MCF 10A (cell line): ENCODE measurements at regions of chr18 and their contacts with region 1.

Region 1: DNA sequence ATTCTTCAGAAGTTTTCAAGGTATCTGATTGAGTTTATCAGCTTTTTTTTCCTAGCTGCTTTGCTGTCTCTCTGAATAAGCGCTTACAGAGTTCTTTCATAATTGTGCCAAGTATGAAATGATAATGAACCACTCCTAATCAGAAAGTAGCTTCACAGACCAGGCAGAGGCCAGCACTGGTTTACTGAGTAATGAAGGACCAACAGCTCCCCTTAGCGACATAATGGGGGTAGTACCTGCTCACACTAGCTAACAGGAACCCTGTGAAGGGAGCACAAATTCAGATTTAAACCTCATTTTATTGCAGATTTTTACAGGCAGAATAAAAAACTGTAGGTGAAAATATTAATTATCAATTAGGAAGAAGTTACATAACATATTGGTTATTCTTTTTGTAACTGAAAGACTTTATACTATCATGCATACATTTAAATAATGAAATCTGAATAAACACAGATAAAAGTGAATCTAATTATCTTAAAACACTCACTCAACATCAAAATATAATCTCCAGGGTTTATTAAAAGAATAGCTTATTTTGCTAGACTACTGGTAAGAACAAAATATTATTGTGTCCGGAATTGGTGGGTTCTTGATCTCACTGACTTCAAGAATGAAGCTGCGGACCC is 53.7 kb upstream of the LRRC30 start:
- DNase-seq: peak; percentile 78
- H3K4me3 Mint-ChIP-seq: no peak overlapping the region
- H3K27ac Mint-ChIP-seq: no peak overlapping the region
- H3K4me1 Mint-ChIP-seq: no peaks in the 10 kb centered on the region
- H3K27me3 Mint-ChIP-seq: peaks cover 29% of the 10 kb centered on the region
- CTCF ChIP-seq: peak; percentile 84

Region 2: GRCh38 chr18:7021994-7022840 is 155.0 kb before region 1 on chr18:
- CTCF ChIA-PET with region 1: interaction called, 43 read pairs
- POLR2A ChIA-PET with region 1: no interaction called
- intact Hi-C with region 1: loop called (anchors 1 kb)
- DNase-seq: peak; percentile 84
- H3K4me3 Mint-ChIP-seq: no peak overlapping the region
- H3K27ac Mint-ChIP-seq: peak overlapping the region; percentile 39
- H3K4me1 Mint-ChIP-seq: no peaks in the 10 kb centered on the region
- H3K27me3 Mint-ChIP-seq: no peaks in the 10 kb centered on the region
- CTCF ChIP-seq: peak; percentile 72

Region 3: GRCh38 chr18:7038330-7038851 is 138.8 kb before region 1 on chr18:
- CTCF ChIA-PET with region 1: interaction called, 41 read pairs
- POLR2A ChIA-PET with region 1: interaction called, 3 read pairs
- intact Hi-C with region 1: loop called (anchors 1 kb)
- DNase-seq: peak; percentile 97
- H3K4me3 Mint-ChIP-seq: peak overlapping the region; percentile 50
- H3K27ac Mint-ChIP-seq: peak overlapping the region; percentile 85
- H3K4me1 Mint-ChIP-seq: peaks cover 7% of the 10 kb centered on the region
- H3K27me3 Mint-ChIP-seq: no peaks in the 10 kb centered on the region
- CTCF ChIP-seq: peak; percentile 75

Region 4: GRCh38 chr18:7158216-7158615 is 19.0 kb before region 1 on chr18:
- CTCF ChIA-PET with region 1: interaction called, 18 read pairs
- POLR2A ChIA-PET with region 1: no interaction called
- intact Hi-C with region 1: no loop called
- DNase-seq: peak; percentile 33
- H3K4me3 Mint-ChIP-seq: no peak overlapping the region
- H3K27ac Mint-ChIP-seq: no peak overlapping the region
- H3K4me1 Mint-ChIP-seq: peaks cover 5% of the 10 kb centered on the region
- H3K27me3 Mint-ChIP-seq: no peaks in the 10 kb centered on the region
- CTCF ChIP-seq: no peak

Region 5: GRCh38 chr18:7164323-7165004 is 12.8 kb before region 1 on chr18:
- CTCF ChIA-PET with region 1: interaction called, 18 read pairs
- POLR2A ChIA-PET with region 1: no interaction called
- intact Hi-C with region 1: no loop called
- DNase-seq: peak; percentile 24
- H3K4me3 Mint-ChIP-seq: no peak overlapping the region
- H3K27ac Mint-ChIP-seq: no peak overlapping the region
- H3K4me1 Mint-ChIP-seq: peaks cover 5% of the 10 kb centered on the region
- H3K27me3 Mint-ChIP-seq: no peaks in the 10 kb centered on the region
- CTCF ChIP-seq: peak; percentile 17

Region 6: DNA sequence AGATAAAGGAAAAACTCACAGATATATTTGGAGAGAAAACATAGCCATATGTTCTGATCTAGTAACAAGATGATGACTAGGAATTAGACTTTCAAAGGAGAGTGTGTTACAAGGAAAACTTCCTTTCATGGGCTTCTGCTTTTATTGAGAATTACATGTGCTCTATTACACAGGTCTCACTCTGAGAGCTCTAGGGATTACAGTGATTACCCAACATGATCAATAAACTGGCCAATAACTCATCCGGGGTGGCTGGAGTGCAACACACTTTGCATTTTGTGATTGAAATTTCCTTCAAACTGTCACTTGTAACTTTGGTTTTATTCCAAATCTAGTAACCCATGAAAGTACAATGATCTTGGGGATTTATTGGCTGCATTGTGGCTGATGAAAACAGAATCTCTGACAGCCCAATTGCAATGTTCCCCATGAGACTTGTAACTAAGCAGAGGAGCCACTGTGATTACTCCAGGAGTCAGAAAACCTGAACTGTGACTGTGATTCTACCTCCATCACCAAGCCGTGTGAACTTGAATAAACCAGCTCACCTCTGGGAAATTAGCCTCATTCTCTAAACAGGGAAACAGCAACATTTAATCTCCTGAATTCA is 13.4 kb after region 1 on chr18:
- CTCF ChIA-PET with region 1: interaction called, 14 read pairs
- POLR2A ChIA-PET with region 1: interaction called, 3 read pairs
- intact Hi-C with region 1: no loop called
- DNase-seq: no peak
- H3K4me3 Mint-ChIP-seq: no peak overlapping the region
- H3K27ac Mint-ChIP-seq: no peak overlapping the region
- H3K4me1 Mint-ChIP-seq: no peaks in the 10 kb centered on the region
- H3K27me3 Mint-ChIP-seq: no peaks in the 10 kb centered on the region
- CTCF ChIP-seq: no peak

Region 7: DNA sequence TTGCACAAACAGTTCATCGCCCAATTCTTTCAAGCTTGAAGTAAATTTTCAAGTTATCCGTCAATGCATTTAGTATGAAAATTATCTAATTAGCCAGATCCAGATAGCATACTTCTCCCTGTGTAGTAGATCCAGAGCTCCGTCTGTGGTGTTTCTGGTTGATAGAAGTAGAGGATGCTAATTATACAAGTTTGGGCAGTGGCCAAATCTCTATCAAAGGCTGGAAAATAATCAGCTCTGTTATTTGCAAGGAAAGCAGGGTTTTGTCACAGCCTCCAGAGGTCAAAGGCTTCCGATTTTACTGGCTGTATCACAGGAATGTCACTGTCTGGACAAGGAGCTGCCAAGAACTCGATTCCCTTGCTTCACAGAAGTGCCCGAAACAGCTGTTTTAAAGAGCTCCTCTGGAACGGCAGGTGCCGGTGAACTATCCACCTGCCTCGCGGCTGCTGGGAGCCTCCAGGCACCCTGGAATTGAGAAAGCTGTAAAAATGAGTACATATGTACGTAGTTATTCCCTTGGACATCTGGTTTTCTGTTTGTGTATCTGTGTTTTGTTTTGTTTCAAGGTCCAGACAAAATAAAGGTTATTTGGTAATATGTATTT is 82.3 kb after region 1 on chr18:
- CTCF ChIA-PET with region 1: no interaction called
- POLR2A ChIA-PET with region 1: no interaction called
- intact Hi-C with region 1: no loop called
- DNase-seq: no peak
- H3K4me3 Mint-ChIP-seq: no peak overlapping the region
- H3K27ac Mint-ChIP-seq: no peak overlapping the region
- H3K4me1 Mint-ChIP-seq: no peaks in the 10 kb centered on the region
- H3K27me3 Mint-ChIP-seq: no peaks in the 10 kb centered on the region
- CTCF ChIP-seq: no peak